ENCODE measurements at regions of chr18 and their contacts with region 1.

Region 1: DNA sequence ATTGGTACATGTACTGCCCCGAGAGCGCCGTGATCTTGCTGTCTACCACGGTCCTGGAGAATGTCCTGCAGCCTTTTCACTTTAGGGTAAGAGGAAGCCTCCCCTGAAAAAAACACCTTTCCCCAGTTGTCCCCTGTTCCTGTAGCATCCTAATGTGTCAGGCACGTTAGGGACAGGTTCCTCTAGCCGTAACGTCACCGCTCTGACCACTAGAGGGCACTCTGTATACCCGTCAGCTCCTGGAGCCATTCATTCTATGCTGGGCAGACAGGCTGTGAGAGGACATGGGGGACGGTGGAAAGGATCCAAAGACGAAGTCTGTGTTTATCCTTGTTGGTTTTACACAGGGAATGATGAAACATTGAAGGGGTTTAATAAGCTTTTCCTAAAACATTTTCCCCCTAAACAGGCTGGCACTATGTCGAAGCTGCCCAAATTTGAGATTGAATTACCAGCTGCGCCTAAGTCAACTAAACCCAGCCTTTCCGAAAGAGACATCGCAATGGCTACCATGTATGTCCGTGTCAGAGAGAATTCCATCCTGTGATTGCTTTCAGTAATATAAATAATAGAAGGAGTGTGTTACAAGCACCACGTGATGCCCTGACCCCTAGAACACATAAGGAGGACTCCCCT is 12.7 kb downstream of the RMC1 start:
- DNase-seq: peak; percentile 71 to 75 (median 75)
- H3K4me3 ChIP-seq: no peak overlapping the region
- H3K4me3 Mint-ChIP-seq: no peak overlapping the region
- H3K27ac ChIP-seq: no peak overlapping the region
- H3K27ac Mint-ChIP-seq: peak overlapping the region; percentile 39 to 91 (median 82)
- H3K4me1 ChIP-seq: peaks cover 13% of the 10 kb centered on the region
- H3K4me1 Mint-ChIP-seq: peaks cover 9 to 30% (median 20%) of the 10 kb centered on the region in 4 donors
- H3K27me3 ChIP-seq: no peaks in the 10 kb centered on the region
- H3K27me3 Mint-ChIP-seq: no peaks in the 10 kb centered on the region

Region 2: DNA sequence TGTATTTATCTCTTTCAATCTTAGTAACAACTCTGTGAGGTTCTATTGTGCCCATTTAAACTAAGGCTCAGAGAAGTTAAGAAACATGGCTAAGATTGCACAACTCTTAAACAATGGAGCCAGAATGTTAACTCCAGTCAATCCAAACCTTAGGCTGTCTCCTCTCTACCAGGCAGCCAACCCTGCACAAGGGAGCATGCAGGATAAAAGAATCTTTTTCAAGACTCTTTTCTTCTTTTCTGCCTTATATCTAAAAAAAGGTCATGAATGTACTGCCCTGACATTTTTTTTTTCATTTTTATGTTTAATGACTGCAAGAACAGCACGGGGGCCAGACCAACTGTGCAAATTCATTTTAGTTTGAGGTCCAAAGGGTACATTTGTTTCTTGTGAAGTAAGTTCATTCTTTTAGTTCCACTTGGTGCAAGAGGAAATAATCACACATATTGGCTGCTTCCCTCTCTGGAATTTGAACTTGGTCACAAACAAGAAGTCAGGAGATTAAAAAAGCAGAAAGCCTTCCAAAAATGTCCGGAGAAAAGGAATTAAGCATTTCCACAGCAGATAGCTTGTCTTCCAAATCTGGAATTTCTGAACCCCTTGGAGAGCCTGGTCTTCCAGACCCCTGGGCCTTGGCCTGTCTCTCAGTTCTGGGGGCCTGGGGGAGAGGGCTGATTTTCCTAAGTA is 159.0 kb before region 1 on chr18:
- CTCF ChIA-PET with region 1: no interaction called
- POLR2A ChIA-PET with region 1: no interaction called
- intact Hi-C with region 1: no loop called
- DNase-seq: no peak
- H3K4me3 ChIP-seq: no peak overlapping the region
- H3K4me3 Mint-ChIP-seq: no peak overlapping the region
- H3K27ac ChIP-seq: no peak overlapping the region
- H3K27ac Mint-ChIP-seq: no peak overlapping the region
- H3K4me1 ChIP-seq: peaks cover 12% of the 10 kb centered on the region
- H3K4me1 Mint-ChIP-seq: peaks cover 4 to 15% (median 10%) of the 10 kb centered on the region in 4 donors
- H3K27me3 ChIP-seq: no peaks in the 10 kb centered on the region
- H3K27me3 Mint-ChIP-seq: no peaks in the 10 kb centered on the region

Region 3: DNA sequence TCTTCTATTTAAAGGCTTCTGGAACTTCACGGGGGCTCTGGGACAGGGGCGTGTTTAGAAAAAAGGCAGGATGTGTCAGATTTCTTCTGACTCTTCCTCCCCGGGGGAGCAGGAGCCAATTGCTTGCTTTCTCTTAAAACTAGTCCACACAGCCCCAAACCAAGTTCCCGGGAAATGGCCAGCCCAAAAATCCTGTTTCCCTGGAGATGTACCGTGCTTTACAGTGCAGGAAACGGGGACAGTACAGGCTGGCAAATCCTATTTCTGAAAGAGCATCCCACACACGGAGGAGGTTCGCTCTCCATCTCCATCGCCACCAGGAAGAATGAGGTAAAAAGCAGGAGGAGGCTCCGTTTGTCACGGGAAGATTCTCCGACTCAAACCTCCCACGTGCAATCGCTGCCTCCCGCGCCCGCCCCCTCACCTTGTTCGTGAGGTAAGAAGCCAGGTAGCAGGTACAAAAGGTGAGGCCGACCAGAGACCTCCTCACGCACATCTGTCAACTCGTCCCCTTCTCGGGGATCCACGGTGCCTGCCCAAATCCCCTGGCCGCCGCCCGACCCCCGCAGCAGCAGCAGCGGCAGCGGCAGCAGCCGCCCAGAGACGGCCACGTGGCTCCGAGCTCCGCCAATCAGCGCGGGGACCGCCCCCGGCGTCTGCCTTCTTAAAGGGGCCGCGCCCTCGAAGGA is 78.5 kb before region 1 on chr18:
- CTCF ChIA-PET with region 1: no interaction called
- POLR2A ChIA-PET with region 1: no interaction called
- intact Hi-C with region 1: no loop called
- DNase-seq: peak; percentile 61 to 77 (median 67)
- H3K4me3 ChIP-seq: peak overlapping the region; percentile 3 to 89
- H3K4me3 Mint-ChIP-seq: peak overlapping the region; percentile 89 to 90 (median 90)
- H3K27ac ChIP-seq: peak overlapping the region; percentile 46
- H3K27ac Mint-ChIP-seq: peak overlapping the region in 6 of 7 donors; percentile 27 to 78 (median 69)
- H3K4me1 ChIP-seq: peaks cover 16% of the 10 kb centered on the region
- H3K4me1 Mint-ChIP-seq: peaks cover 7 to 16% (median 11%) of the 10 kb centered on the region in 4 donors
- H3K27me3 ChIP-seq: no peaks in the 10 kb centered on the region
- H3K27me3 Mint-ChIP-seq: peaks cover 2 to 3% of the 10 kb centered on the region in 2 donors

Region 4: DNA sequence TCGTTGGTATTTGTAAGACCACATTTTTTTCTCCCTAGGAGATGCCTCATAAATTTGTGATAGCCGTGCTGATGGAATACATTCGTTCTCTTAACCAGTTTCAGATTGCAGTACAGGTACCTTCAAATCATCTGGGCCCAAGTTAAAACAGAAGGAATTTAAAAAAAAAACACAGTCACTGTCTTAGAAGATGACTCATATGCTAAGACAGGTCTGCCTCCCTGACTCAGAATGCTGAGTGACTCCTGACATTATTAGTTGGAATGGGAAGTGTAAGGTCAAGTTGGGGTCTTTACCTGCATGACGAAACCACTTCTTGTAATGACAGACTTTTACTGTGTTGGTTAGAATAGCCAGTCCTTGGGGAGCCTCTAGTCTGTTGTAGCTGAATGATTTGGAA is 13.6 kb after region 1 on chr18:
- CTCF ChIA-PET with region 1: interaction called, 19 read pairs
- POLR2A ChIA-PET with region 1: interaction called, 3 read pairs
- intact Hi-C with region 1: no loop called
- DNase-seq: no peak
- H3K4me3 ChIP-seq: no peak overlapping the region
- H3K4me3 Mint-ChIP-seq: no peak overlapping the region
- H3K27ac ChIP-seq: no peak overlapping the region
- H3K27ac Mint-ChIP-seq: peak overlapping the region in 5 of 7 donors; percentile 5 to 48 (median 14)
- H3K4me1 ChIP-seq: no peaks in the 10 kb centered on the region
- H3K4me1 Mint-ChIP-seq: peaks cover 0 to 2% (median 0%) of the 10 kb centered on the region in 4 donors
- H3K27me3 ChIP-seq: no peaks in the 10 kb centered on the region
- H3K27me3 Mint-ChIP-seq: no peaks in the 10 kb centered on the region

Region 5: GRCh38 chr18:23553887-23554286 is 37.9 kb after region 1 on chr18:
- CTCF ChIA-PET with region 1: interaction called, 17 read pairs
- POLR2A ChIA-PET with region 1: interaction called, 3 read pairs
- intact Hi-C with region 1: no loop called
- DNase-seq: no peak
- H3K4me3 ChIP-seq: no peak overlapping the region
- H3K4me3 Mint-ChIP-seq: no peak overlapping the region
- H3K27ac ChIP-seq: no peak overlapping the region
- H3K27ac Mint-ChIP-seq: peak overlapping the region in 3 of 7 donors; percentile 13 to 70 (median 31)
- H3K4me1 ChIP-seq: no peaks in the 10 kb centered on the region
- H3K4me1 Mint-ChIP-seq: peaks cover 0 to 7% (median 3%) of the 10 kb centered on the region in 4 donors
- H3K27me3 ChIP-seq: no peaks in the 10 kb centered on the region
- H3K27me3 Mint-ChIP-seq: no peaks in the 10 kb centered on the region

Region 6: DNA sequence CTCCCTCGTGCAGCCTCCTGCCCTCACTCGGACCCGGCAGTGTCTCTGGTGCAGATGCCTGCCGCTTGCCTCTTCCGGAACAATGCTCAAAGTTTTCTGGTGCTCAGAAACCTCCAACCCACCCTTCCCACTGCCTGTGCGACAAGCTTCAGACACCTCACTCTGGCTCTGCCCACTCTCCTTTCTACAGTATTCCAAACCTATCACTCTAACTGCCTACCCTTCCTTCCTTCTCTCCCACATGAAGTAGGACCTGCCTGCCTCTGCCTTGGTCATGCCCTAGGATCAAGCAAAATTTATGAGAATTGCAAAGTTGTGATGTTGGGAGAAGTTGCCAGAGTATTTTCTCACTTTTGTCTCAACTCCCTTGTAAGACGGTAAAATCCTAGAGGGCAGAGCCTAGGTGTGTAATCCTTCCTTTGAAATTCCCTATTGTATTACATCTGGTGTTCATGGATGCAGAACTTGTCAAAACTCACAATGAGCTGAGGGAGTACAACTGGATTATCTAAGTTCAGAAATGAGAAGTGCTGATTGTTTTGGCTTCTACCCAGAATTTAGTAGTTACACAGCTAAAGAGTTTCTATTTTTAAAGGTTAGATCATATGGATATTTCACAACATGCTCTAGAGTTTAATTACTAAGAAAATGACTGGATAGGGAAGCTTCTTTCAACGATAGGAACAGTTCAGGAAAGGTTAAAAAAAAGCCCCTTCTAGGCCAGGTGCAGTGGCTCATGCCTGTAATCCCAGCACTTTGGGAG is 63.0 kb after region 1 on chr18:
- CTCF ChIA-PET with region 1: interaction called, 57 read pairs
- POLR2A ChIA-PET with region 1: interaction called, 6 read pairs
- intact Hi-C with region 1: no loop called
- DNase-seq: no peak
- H3K4me3 ChIP-seq: no peak overlapping the region
- H3K4me3 Mint-ChIP-seq: peak overlapping the region in 2 of 8 donors; percentile 6 to 45
- H3K27ac ChIP-seq: no peak overlapping the region
- H3K27ac Mint-ChIP-seq: peak overlapping the region; percentile 12 to 95 (median 63)
- H3K4me1 ChIP-seq: peaks cover 65% of the 10 kb centered on the region
- H3K4me1 Mint-ChIP-seq: peaks cover 47 to 78% (median 68%) of the 10 kb centered on the region in 4 donors
- H3K27me3 ChIP-seq: no peaks in the 10 kb centered on the region
- H3K27me3 Mint-ChIP-seq: no peaks in the 10 kb centered on the region

Region 7: DNA sequence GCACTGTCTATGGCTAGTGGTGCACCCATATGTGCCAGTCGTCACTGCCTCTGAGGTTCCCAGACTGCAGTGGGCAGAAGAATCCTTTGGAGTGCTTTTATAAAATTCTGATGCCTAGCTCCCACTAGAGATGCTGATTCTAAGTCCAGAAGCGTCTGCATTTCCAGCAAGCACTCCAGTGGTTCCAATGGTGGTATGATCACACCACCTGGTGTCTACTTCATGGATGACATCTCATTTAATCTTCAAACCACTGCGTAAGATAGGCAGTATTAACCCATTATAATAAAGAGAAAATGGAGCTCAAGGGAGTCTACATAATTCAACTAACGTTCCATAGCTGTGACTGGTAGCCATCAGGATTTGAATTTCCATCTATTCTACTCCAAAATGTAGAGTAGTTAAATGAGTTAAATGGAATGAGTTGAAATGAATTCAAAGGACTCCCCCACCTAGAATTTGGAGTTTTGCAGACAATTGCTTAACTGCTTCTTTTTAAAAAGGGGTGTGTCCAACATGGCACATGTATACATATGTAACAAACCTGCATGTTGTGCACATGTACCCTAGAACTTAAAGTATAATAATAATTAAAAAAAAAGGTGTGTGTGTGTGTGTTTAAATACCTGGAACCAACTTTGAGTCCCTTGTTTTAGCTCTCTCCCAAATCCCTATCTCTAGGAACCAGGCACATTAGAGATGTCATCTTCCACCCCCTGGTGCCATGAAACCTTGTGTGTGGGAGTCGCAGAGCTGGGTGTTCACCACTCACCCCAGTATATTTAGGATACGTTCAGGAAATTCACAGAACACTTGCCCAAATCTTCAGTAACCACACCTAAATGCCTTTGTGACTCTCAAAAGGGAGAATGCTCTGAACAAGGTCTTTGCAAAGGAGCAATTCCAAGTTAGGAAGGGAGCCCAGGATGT is 187.3 kb after region 1 on chr18:
- CTCF ChIA-PET with region 1: interaction called, 13 read pairs
- POLR2A ChIA-PET with region 1: no interaction called
- intact Hi-C with region 1: no loop called
- DNase-seq: peak; percentile 39 to 50 (median 48)
- H3K4me3 ChIP-seq: no peak overlapping the region
- H3K4me3 Mint-ChIP-seq: no peak overlapping the region
- H3K27ac ChIP-seq: no peak overlapping the region
- H3K27ac Mint-ChIP-seq: no peak overlapping the region
- H3K4me1 ChIP-seq: no peaks in the 10 kb centered on the region
- H3K4me1 Mint-ChIP-seq: no peaks in the 10 kb centered on the region
- H3K27me3 ChIP-seq: no peaks in the 10 kb centered on the region
- H3K27me3 Mint-ChIP-seq: peaks cover 14 to 31% of the 10 kb centered on the region in 2 donors

Region 8: GRCh38 chr18:24126155-24126961 is 610.3 kb after region 1 on chr18:
- CTCF ChIA-PET with region 1: no interaction called
- POLR2A ChIA-PET with region 1: no interaction called
- intact Hi-C with region 1: no loop called
- DNase-seq: no peak
- H3K4me3 ChIP-seq: no peak overlapping the region
- H3K4me3 Mint-ChIP-seq: no peak overlapping the region
- H3K27ac ChIP-seq: no peak overlapping the region
- H3K27ac Mint-ChIP-seq: peak overlapping the region in 4 of 7 donors; percentile 31 to 62 (median 49)
- H3K4me1 ChIP-seq: no peaks in the 10 kb centered on the region
- H3K4me1 Mint-ChIP-seq: peaks cover 0 to 10% (median 5%) of the 10 kb centered on the region in 4 donors
- H3K27me3 ChIP-seq: no peaks in the 10 kb centered on the region
- H3K27me3 Mint-ChIP-seq: no peaks in the 10 kb centered on the region